ENCODE measurements at regions of chr5 and their contacts with region 1.

Region 1: DNA sequence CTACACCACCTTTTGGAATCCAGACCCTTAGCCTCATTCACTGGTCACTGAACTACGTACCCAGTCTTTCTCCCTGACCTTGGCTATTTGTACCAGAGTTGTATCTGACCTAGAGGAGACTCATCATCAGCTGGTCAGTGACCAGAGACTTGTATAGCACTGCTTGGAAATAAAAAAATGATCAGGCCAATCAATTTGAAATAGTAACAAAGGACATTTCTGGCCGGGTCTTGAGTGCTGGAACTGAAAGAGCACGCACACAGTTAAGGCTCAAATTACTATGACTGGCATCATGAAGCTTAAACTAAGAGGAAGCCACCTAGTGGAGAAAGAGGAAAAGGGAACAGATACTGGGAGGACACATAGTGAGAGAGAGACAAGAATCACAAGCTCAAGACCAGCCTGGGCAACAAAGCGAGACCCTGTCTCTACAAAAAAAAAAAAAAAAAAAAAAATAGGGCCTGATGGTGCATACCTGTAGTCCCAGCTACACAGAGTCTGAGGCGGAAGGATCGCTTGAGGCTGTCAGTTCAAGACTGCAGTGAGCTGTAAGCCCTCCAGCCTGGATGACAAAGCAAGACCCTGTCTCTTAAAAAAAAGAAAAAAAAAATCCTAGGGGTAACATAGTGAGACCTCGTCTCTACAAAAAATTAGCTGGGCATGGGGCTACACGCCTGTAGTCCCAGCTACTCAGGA is 12.8 kb upstream of the SRP19 start:
- DNase-seq: peak; percentile 74
- H3K4me3 Mint-ChIP-seq: no peak overlapping the region
- H3K27ac Mint-ChIP-seq: no peak overlapping the region
- H3K4me1 Mint-ChIP-seq: peaks cover 3% of the 10 kb centered on the region
- H3K27me3 Mint-ChIP-seq: peaks cover 9% of the 10 kb centered on the region

Region 2: DNA sequence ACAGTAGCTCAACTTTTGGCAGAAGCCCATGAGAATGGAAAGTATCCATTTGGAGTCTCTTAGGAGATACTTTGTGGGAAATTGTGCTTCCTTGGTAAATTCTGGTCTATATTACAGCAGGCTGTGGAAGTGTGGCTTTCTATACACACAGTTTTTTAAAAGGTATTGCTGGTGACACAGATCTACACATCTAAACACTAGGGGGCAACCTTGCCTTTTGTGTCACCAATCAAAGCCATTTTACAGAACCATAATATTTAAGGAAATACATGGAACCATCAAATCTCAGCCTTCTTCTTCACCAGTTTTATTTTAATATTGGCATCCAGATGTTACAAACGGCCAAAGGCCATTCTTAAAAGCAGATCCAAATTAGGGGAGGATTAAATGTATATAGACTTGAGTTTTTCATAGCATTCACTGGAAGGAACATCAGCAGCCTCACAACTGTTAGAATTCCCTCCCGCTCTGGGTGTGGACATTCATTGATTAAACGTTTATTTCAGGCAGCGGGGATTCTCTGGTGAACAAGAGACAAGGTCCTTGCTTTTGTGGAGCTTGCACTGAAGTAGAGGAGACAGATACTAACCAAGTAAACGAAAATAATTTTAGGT is 296.7 kb before region 1 on chr5:
- intact Hi-C with region 1: loop called (anchors 1 kb)
- DNase-seq: peak; percentile 79
- H3K4me3 Mint-ChIP-seq: no peak overlapping the region
- H3K27ac Mint-ChIP-seq: no peak overlapping the region
- H3K4me1 Mint-ChIP-seq: peaks cover 2% of the 10 kb centered on the region
- H3K27me3 Mint-ChIP-seq: peaks cover 20% of the 10 kb centered on the region